Esophagus squamous epithelium (tissue), 5 donors: ENCODE measurements at regions of chr2 and their contacts with region 1.

Region 1: DNA sequence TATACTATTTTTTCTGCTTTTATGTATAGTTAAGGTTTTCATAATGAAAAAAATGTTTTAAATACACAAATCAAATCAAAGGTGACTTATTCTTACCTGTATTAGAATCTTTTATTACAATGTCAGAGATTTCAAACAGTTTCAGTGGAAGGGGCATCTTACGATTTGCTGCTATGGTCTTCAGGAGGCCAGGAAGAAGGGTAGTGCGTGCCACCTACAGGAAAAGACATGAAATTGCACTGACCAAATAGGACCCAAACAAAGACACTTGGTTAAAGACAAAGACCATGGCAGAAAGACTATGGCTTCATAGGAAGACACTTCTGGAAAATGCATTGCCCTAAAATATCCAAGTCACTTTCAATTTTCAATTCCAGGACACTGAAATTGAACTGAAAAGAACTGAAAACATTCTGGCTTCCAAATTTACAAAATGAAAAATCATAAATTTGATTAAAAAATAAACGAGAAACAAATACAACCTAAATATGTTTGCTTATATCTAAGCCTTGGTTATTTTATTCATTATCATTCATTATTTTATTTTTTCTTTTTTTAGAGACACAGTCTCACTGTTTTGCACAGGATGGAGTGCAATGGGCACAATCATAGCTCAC is 42.1 kb downstream of the FARSB start:
- DNase-seq: no peak
- H3K4me3 ChIP-seq: no peak overlapping the region
- H3K27ac ChIP-seq: no peak overlapping the region
- H3K4me1 ChIP-seq: no peaks in the 10 kb centered on the region
- H3K27me3 ChIP-seq: no peaks in the 10 kb centered on the region
- CTCF ChIP-seq: peak; percentile 49 to 73 (median 64)
- POLR2A ChIP-seq: no peak

Region 2: GRCh38 chr2:222057347-222058073 is 556.3 kb before region 1 on chr2:
- intact Hi-C with region 1: loop called (anchors 10 kb)
- DNase-seq: no peak
- H3K4me3 ChIP-seq: no peak overlapping the region
- H3K27ac ChIP-seq: no peak overlapping the region
- H3K4me1 ChIP-seq: no peaks in the 10 kb centered on the region
- H3K27me3 ChIP-seq: peaks cover 0 to 83% (median 2%) of the 10 kb centered on the region in 4 donors
- CTCF ChIP-seq: peak in 4 of 6 experiments; percentile 19 to 46 (median 37)
- POLR2A ChIP-seq: no peak